ENCODE measurements at regions of chr19 and their contacts with region 1.

Region 1: DNA sequence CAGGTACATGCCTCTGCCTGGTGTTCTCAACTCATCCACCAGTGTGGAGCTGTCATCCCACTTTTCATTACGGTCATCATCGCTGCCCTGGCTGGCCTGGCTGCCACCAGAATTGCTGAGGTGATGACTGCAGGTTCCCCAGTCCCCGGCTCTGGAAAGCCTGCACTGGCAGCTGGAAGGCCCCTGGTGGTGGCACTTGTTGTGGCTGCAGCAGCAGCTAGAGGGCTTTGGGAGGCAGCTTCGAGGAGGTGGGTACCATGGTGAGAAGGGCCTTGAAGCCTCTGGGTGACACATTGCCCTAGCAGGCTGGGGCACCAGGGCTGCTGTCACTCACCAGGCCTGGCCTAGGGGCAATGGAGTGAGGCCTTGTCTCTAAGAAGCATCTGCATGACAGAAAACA is 25.3 kb upstream of the ZNF14 start:
- DNase-seq: no peak
- H3K4me3 ChIP-seq: no peak overlapping the region
- H3K4me3 Mint-ChIP-seq: no peak overlapping the region
- H3K27ac ChIP-seq: no peak overlapping the region
- H3K27ac Mint-ChIP-seq: no peak overlapping the region
- H3K4me1 ChIP-seq: no peaks in the 10 kb centered on the region
- H3K4me1 Mint-ChIP-seq: no peaks in the 10 kb centered on the region
- H3K27me3 ChIP-seq: no peaks in the 10 kb centered on the region
- H3K27me3 Mint-ChIP-seq: no peaks in the 10 kb centered on the region

Region 2: DNA sequence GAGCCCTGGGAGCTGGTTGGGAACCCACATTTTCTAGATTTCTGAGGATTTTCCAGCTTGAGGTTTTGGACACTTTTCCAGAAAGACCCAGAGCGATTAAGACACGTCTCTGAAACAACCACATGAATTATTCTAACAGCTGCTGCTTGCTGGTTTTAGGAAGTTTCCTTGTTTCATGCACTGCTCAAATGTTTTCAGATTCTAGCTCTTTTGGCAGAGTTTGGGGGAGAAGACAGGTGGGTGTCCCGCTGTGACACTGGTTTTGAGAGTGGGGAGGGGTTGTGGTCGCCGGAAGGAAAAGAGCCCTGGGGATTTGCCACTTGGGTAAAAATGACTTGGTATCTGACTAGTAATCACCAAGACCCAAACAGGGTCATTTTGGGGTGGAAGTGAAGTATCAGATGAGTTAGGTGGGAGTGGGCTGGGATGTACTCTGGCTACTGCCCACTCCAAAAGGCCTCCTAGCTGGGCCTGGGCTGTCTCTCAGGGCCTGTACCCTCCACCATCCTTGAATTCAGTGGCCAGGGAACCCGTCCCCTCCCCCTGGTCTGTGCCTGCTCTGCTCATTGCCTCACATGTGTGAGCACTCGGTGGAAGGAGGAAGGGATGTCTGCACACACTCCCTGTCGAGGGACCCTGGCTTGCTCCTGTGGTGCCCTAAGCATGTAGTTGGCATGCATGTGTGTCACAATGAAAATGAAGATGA is 339.5 kb before region 1 on chr19:
- CTCF ChIA-PET with region 1: no interaction called
- POLR2A ChIA-PET with region 1: interaction called, 11 read pairs
- DNase-seq: no peak
- H3K4me3 ChIP-seq: no peak overlapping the region
- H3K4me3 Mint-ChIP-seq: peak overlapping the region; percentile 7 to 69 (median 60)
- H3K27ac ChIP-seq: no peak overlapping the region
- H3K27ac Mint-ChIP-seq: peak overlapping the region; percentile 79 to 98 (median 86)
- H3K4me1 ChIP-seq: peaks cover 63% of the 10 kb centered on the region
- H3K4me1 Mint-ChIP-seq: peaks cover 72 to 82% (median 75%) of the 10 kb centered on the region in 3 donors
- H3K27me3 ChIP-seq: no peaks in the 10 kb centered on the region
- H3K27me3 Mint-ChIP-seq: no peaks in the 10 kb centered on the region

Measured in CD8-positive, alpha-beta memory T cell (primary cell).